ENCODE measurements at regions of chr11 and their contacts with region 1.

Region 1: DNA sequence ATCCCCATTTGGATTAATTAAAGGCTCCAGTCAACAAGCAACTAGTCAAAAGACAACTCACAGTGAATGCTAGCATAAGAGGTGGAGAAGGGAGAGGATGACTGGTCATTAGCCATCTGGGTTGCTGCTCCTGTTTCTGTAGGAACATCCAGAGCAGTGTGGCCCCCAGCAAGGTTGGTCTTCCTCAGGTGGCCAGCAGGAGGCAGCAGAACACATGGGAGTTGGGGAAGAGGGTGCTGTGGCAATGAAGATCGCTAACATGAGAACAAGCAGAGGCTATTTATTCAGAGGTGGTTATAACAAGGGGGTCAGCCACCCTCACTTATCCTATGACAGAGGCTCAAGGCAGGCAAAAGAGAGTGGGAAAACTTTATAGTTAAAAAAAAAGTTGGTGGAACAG is 21.3 kb downstream of the IZUMO1R start:
- DNase-seq: peak; percentile 68
- H3K4me3 Mint-ChIP-seq: no peak overlapping the region
- H3K27ac Mint-ChIP-seq: no peak overlapping the region
- H3K4me1 Mint-ChIP-seq: no peaks in the 10 kb centered on the region
- H3K27me3 Mint-ChIP-seq: peaks cover 7% of the 10 kb centered on the region

Region 2: GRCh38 chr11:94504689-94505293 is 179.1 kb after region 1 on chr11:
- CTCF ChIA-PET with region 1: interaction called, 36 read pairs
- POLR2A ChIA-PET with region 1: interaction called, 3 read pairs
- DNase-seq: no peak
- H3K4me3 Mint-ChIP-seq: no peak overlapping the region
- H3K27ac Mint-ChIP-seq: no peak overlapping the region
- H3K4me1 Mint-ChIP-seq: no peaks in the 10 kb centered on the region
- H3K27me3 Mint-ChIP-seq: peaks cover 3% of the 10 kb centered on the region